ENCODE measurements at regions of chr22 and their contacts with region 1.

Region 1: GRCh38 chr22:50341977-50342650 is 1.0 kb upstream of the PPP6R2 start:
- DNase-seq: peak; percentile 80
- ATAC-seq: peak; percentile 61
- H3K4me3 Mint-ChIP-seq: peak overlapping the region; percentile 83
- H3K27ac Mint-ChIP-seq: peak overlapping the region; percentile 89
- H3K4me1 Mint-ChIP-seq: peaks cover 12% of the 10 kb centered on the region
- H3K27me3 Mint-ChIP-seq: no peaks in the 10 kb centered on the region
- CTCF ChIP-seq: peak; percentile 91

Region 2: GRCh38 chr22:50148991-50149721 is 193.0 kb before region 1 on chr22:
- CTCF ChIA-PET with region 1: no interaction called
- POLR2A ChIA-PET with region 1: no interaction called
- intact Hi-C with region 1: loop called (anchors 2 kb)
- DNase-seq: peak; percentile 67
- ATAC-seq: peak; percentile 98
- H3K4me3 Mint-ChIP-seq: no peak overlapping the region
- H3K27ac Mint-ChIP-seq: no peak overlapping the region
- H3K4me1 Mint-ChIP-seq: peaks cover 4% of the 10 kb centered on the region
- H3K27me3 Mint-ChIP-seq: no peaks in the 10 kb centered on the region
- CTCF ChIP-seq: peak; percentile 66

Region 3: GRCh38 chr22:50244420-50245213 is 97.5 kb before region 1 on chr22 and contains the start of gene TUBGCP6:
- CTCF ChIA-PET with region 1: interaction called, 39 read pairs
- POLR2A ChIA-PET with region 1: interaction called, 3 read pairs
- intact Hi-C with region 1: loop called (anchors 1 kb)
- DNase-seq: peak; percentile 96
- ATAC-seq: peak; percentile 76
- H3K4me3 Mint-ChIP-seq: peak within 1 kb of the TSS; percentile 100
- H3K27ac Mint-ChIP-seq: peak within 1 kb of the TSS; percentile 100
- H3K4me1 Mint-ChIP-seq: peaks cover 52% of the 10 kb centered on the region
- H3K27me3 Mint-ChIP-seq: no peaks in the 10 kb centered on the region
- CTCF ChIP-seq: no peak
- total RNA-seq, gene TUBGCP6: 87.5 and 103 TPM in 2 replicates

Region 4: GRCh38 chr22:50276143-50276542 is 66.0 kb before region 1 on chr22:
- CTCF ChIA-PET with region 1: interaction called, 17 read pairs
- POLR2A ChIA-PET with region 1: interaction called, 8 read pairs
- intact Hi-C with region 1: loop called (anchors 1 kb)
- DNase-seq: no peak
- ATAC-seq: peak; percentile 78
- H3K4me3 Mint-ChIP-seq: no peak overlapping the region
- H3K27ac Mint-ChIP-seq: no peak overlapping the region
- H3K4me1 Mint-ChIP-seq: peaks cover 10% of the 10 kb centered on the region
- H3K27me3 Mint-ChIP-seq: no peaks in the 10 kb centered on the region
- CTCF ChIP-seq: no peak

Region 5: DNA sequence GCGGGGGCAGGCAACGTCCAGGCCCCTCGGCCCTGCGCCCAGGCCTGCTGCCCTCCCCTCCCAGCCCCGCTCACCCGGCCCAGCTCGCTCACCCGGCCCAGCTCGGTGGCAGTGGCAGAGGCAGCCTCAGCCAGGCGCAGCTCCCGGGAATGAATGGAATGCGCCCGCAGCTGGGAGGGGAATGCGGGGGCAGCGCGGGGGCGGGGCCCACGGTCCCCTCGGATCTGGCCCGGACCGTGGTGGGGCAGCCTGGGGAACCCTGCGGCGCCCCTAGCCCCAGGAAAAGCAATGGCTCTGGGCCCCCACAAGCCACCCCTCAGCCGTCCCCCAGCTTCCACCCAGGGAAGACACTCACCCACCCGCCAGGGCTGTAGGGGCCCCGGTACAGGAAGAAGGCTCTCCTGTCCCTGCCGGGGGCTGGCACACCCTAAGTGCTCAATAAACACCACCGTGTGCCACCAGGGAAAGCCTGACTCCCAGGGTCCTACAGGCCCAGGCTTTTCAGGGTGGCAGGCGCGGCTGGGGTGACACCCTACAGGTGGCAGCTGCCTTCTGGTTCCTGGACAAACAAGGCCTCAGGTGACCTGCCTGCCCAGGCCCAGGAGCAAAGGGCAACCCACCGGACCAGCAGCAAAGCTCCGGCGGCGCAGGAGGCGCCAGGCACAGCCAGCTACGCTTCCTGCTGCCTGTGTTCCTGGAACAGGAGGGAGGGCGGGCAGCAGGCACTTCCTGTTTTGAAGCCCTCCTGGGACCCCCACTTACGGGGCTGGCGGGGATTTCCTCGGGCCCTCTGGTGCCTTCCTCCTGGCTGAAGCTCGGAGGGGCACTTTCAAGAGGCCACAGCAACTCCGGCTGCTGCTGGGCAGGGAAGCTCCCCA is 48.4 kb before region 1 on chr22:
- CTCF ChIA-PET with region 1: interaction called, 4 read pairs
- POLR2A ChIA-PET with region 1: interaction called, 7 read pairs
- intact Hi-C with region 1: loop called (anchors 5 kb)
- DNase-seq: no peak
- ATAC-seq: peak; percentile 51
- H3K4me3 Mint-ChIP-seq: peak overlapping the region; percentile 56
- H3K27ac Mint-ChIP-seq: no peak overlapping the region
- H3K4me1 Mint-ChIP-seq: peaks cover 47% of the 10 kb centered on the region
- H3K27me3 Mint-ChIP-seq: peaks cover 6% of the 10 kb centered on the region
- CTCF ChIP-seq: no peak

Region 6: GRCh38 chr22:50326959-50327710 is 15.0 kb before region 1 on chr22 and contains the start of gene DENND6B:
- CTCF ChIA-PET with region 1: interaction called, 13 read pairs
- POLR2A ChIA-PET with region 1: interaction called, 6 read pairs
- intact Hi-C with region 1: loop called (anchors 1 kb)
- DNase-seq: peak; percentile 82
- ATAC-seq: peak; percentile 92
- H3K4me3 Mint-ChIP-seq: peak within 1 kb of the TSS; percentile 86
- H3K27ac Mint-ChIP-seq: peak within 1 kb of the TSS; percentile 76
- H3K4me1 Mint-ChIP-seq: peaks cover 20% of the 10 kb centered on the region
- H3K27me3 Mint-ChIP-seq: peaks cover 3% of the 10 kb centered on the region
- CTCF ChIP-seq: no peak
- total RNA-seq, gene DENND6B: 3.2 and 5.2 TPM in 2 replicates

Region 7: DNA sequence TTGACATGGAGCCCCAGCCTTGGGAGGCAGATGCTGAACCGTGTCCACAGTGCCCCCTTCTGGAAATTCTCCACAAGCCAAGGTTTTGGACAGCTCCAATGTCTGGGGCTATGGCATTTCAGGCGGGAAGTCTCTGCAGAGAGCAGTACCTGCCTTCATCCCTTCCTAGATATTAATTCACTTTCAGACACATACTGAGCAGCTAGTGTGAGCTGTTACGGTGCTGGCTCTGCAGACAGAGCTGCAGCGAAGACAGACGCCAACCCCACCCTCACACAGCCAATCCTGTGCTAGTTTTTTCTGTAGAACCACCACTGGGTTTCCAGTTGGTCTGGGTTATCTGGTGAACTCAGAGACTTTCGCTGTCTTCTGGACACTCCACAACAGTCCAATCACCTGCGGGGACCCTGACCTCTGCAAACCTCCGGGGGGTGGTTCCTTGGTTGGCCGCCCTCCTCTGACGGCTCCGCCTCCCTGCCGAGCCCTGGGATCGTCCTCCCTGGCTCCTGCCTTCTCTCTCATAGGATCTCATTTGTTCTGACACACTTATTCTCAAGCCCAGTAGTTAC is 156.3 kb after region 1 on chr22:
- CTCF ChIA-PET with region 1: interaction called, 3 read pairs
- POLR2A ChIA-PET with region 1: interaction called, 4 read pairs
- intact Hi-C with region 1: loop called (anchors 1 kb)
- DNase-seq: peak; percentile 38
- ATAC-seq: peak; percentile 95
- H3K4me3 Mint-ChIP-seq: no peak overlapping the region
- H3K27ac Mint-ChIP-seq: no peak overlapping the region
- H3K4me1 Mint-ChIP-seq: peaks cover 3% of the 10 kb centered on the region
- H3K27me3 Mint-ChIP-seq: no peaks in the 10 kb centered on the region
- CTCF ChIP-seq: no peak

Region 8: DNA sequence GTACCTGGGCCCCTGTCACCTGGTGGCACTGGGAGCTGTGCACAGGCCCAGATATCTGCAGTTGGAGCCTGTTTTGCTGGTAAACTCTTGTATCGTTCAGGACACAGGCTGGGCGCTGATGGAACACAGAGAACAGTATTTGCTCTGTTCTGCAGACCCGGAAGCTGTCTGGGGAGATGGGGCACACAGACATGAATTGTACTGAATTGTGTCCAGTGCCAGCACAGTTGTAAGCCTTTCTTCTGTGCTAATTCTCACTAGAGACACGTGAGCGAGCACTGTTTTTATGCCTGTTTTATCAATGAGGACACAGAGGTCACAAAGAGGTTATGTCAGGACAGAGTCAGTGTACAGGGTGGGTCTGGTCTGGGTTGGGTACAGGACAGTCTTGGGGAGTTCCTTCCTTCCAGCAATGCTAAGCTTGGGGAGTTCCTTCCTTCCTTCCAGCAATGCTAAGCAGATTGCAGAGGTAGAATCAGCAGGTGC is 371.5 kb after region 1 on chr22:
- CTCF ChIA-PET with region 1: no interaction called
- POLR2A ChIA-PET with region 1: no interaction called
- intact Hi-C with region 1: no loop called
- DNase-seq: no peak
- ATAC-seq: no peak
- H3K4me3 Mint-ChIP-seq: no peak overlapping the region
- H3K27ac Mint-ChIP-seq: no peak overlapping the region
- H3K4me1 Mint-ChIP-seq: no peaks in the 10 kb centered on the region
- H3K27me3 Mint-ChIP-seq: no peaks in the 10 kb centered on the region
- CTCF ChIP-seq: no peak

Measured in activated B cell treated with CpG ODN at 0.5 μM for 24 hours (primary cell).